ENCODE measurements at regions of chr5 and their contacts with region 1.

Region 1: GRCh38 chr5:99104538-99105132 is 175.8 kb upstream of the CHD1 start:
- DNase-seq: no peak
- H3K4me3 Mint-ChIP-seq: no peak overlapping the region
- H3K27ac Mint-ChIP-seq: no peak overlapping the region
- H3K4me1 Mint-ChIP-seq: no peaks in the 10 kb centered on the region
- H3K27me3 Mint-ChIP-seq: no peaks in the 10 kb centered on the region

Region 2: DNA sequence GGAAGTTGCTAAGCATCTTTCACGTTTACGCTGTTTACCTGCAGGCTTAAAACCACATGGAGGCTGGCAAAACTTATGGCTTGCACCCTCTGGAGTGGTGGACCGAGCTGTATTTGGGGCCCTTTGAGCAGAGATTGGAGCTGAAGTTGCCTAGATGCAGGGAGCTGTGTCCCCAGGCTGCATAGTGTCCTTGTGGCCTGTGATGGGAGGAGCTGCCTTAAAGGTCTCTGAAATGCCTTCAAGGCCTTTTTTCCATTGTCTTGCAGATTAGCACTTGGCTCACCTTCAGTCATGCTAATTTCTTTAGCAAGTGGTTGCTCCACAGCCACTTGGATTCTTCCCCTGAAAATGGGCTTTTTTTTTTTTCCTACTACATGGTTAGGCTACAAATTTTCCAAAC is 94.3 kb before region 1 on chr5:
- CTCF ChIA-PET with region 1: no interaction called
- intact Hi-C with region 1: no loop called
- DNase-seq: no peak
- H3K4me3 Mint-ChIP-seq: no peak overlapping the region
- H3K27ac Mint-ChIP-seq: no peak overlapping the region
- H3K4me1 Mint-ChIP-seq: peaks cover 3% of the 10 kb centered on the region
- H3K27me3 Mint-ChIP-seq: peaks cover 1% of the 10 kb centered on the region

Region 3: GRCh38 chr5:99088309-99088708 is 16.3 kb before region 1 on chr5:
- CTCF ChIA-PET with region 1: interaction called, 11 read pairs
- intact Hi-C with region 1: no loop called
- DNase-seq: no peak
- H3K4me3 Mint-ChIP-seq: no peak overlapping the region
- H3K27ac Mint-ChIP-seq: no peak overlapping the region
- H3K4me1 Mint-ChIP-seq: peaks cover 9% of the 10 kb centered on the region
- H3K27me3 Mint-ChIP-seq: no peaks in the 10 kb centered on the region

Region 4: GRCh38 chr5:99119351-99119750 is 14.7 kb after region 1 on chr5:
- CTCF ChIA-PET with region 1: interaction called, 17 read pairs
- intact Hi-C with region 1: no loop called
- DNase-seq: no peak
- H3K4me3 Mint-ChIP-seq: no peak overlapping the region
- H3K27ac Mint-ChIP-seq: no peak overlapping the region
- H3K4me1 Mint-ChIP-seq: no peaks in the 10 kb centered on the region
- H3K27me3 Mint-ChIP-seq: no peaks in the 10 kb centered on the region

Region 5: GRCh38 chr5:100430268-100431195 is 1325.9 kb after region 1 on chr5:
- CTCF ChIA-PET with region 1: no interaction called
- intact Hi-C with region 1: loop called (anchors 10 kb)
- DNase-seq: peak; percentile 65
- H3K4me3 Mint-ChIP-seq: no peak overlapping the region
- H3K27ac Mint-ChIP-seq: no peak overlapping the region
- H3K4me1 Mint-ChIP-seq: no peaks in the 10 kb centered on the region
- H3K27me3 Mint-ChIP-seq: no peaks in the 10 kb centered on the region

Measured in activated naive CD4-positive, alpha-beta T cell treated with anti-CD3 and anti-CD28 coated beads for 36 hours (primary cell).